ENCODE measurements at regions of chr5 and their contacts with region 1.

Region 1: DNA sequence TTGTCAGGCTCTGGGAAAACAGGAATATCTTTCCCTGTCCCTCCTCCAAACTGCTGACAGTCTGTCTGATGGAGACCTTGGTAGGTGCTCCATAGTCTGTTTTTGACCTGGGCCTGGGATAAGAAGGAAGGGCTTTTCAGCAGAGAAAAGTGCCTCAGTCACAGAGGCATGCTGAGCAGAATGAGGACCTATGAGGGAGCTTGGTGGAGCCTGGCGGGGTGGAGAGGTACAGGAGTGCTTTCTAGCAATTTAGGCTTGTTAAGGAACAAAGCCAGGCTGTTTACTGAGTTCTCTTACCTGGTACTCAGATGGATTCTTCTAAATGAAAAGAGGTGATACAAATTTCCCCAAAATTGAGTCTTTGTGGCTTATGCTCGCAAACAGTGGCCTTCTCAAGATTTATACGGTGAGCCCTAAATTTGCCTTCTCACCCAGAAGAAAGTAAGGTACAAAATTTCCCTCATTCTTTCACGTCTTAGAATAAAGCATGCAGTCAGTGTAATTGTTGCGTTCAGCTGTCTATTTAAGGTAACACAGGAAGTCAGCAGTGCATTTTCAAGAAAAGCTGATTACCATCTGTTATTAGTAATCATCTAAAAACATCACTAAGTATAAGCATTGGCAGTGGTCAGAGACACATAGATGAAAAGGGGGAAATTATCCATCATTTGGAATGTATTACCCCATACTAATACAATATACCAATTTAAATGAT is 28.6 kb upstream of the IL13 start:
- DNase-seq: no peak
- ATAC-seq: peak; percentile 42
- H3K4me3 ChIP-seq: no peak overlapping the region
- H3K4me3 Mint-ChIP-seq: peak overlapping the region in 1 of 10 donors; percentile 55
- H3K27ac ChIP-seq: no peak overlapping the region
- H3K27ac Mint-ChIP-seq: peak overlapping the region in 2 of 9 donors; percentile 32 to 92
- H3K4me1 ChIP-seq: no peaks in the 10 kb centered on the region
- H3K4me1 Mint-ChIP-seq: peaks cover 0 to 54% (median 0%) of the 10 kb centered on the region in 7 donors
- H3K27me3 ChIP-seq: no peaks in the 10 kb centered on the region
- H3K27me3 Mint-ChIP-seq: no peaks in the 10 kb centered on the region

Region 2: DNA sequence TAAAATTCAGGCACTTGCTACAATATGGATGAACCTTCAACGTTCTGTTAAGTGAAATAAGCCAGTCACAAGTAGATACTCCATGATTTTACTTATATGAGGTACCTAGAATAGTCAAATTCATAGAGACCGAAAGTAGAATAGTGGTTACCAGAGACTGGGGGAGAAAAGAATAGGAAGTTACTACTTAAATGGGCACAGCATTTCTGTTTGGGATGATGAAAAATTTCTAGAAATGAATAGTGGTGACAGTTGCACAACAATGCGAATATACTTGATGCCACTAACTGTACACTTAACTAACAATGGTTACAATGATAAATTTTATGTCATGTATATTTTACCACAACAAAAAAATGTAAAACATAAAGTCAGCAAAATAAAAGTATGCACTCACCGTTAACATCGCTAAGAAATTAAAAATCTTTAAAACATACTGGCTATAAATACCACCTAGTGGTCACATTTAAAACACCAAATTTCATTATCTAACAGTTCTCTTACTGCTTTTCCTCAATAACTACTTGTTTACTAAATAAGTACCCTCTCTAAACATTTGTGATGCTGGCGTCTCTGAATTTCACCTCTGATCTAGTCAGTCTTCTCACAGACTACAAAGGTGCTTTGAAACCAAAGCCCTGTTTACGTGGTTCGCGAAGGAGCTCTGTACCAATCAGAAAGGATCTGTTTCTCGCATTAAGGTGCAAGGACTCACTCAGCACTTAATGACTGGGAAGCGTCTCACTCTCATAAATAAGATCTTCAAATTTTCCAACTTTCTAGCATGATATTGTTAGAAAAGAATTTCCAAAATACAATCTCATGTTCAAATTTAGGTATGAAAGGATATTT is 85.3 kb after region 1 on chr5:
- CTCF ChIA-PET with region 1: no interaction called
- POLR2A ChIA-PET with region 1: no interaction called
- intact Hi-C with region 1: loop called in 1 of 2 experiments (anchors 10 kb)
- DNase-seq: peak in 5 of 9 donors; percentile 6 to 23 (median 14)
- ATAC-seq: peak; percentile 34
- H3K4me3 ChIP-seq: no peak overlapping the region
- H3K4me3 Mint-ChIP-seq: peak overlapping the region in 6 of 10 donors; percentile 28 to 70 (median 46)
- H3K27ac ChIP-seq: no peak overlapping the region
- H3K27ac Mint-ChIP-seq: peak overlapping the region in 3 of 9 donors; percentile 22 to 78 (median 60)
- H3K4me1 ChIP-seq: no peaks in the 10 kb centered on the region
- H3K4me1 Mint-ChIP-seq: peaks cover 0 to 20% (median 9%) of the 10 kb centered on the region in 7 donors
- H3K27me3 ChIP-seq: no peaks in the 10 kb centered on the region
- H3K27me3 Mint-ChIP-seq: no peaks in the 10 kb centered on the region

Measured in naive thymus-derived CD4-positive, alpha-beta T cell (primary cell).